IMR-90 (cell line): ENCODE measurements at regions of chr15 and their contacts with region 1.

Region 1: DNA sequence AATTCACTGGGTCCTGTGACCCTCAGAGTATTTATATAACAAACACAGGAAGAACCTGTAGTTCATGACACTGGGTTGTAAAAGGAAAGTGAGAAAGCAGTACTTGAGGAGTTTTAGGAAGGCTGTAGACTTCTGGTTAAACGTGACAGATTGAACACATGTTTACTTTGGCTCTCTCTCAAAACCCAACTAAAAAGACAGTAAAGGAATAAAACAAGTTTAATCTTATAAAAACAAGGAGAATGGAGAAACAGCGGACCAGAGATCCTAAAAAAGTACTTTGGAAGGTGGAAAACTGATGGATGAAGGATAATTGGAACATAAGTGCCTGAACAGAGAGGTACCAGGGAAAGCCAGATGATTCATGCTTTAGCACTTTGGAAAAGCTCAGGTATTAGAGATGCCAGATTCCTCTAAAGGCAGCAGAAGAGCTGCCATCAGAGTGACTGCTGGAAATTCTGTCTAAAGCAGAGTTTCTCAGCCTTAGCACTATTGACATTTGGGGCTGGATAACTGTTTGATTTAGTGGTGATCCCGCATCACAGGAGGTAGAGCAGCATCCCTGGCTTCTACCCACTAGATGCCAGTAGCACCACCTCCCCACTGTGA is 182.9 kb upstream of the RORA start:
- DNase-seq: no peak
- ATAC-seq: no peak
- H3K4me3 ChIP-seq: no peak overlapping the region
- H3K27ac ChIP-seq: no peak overlapping the region
- H3K4me1 ChIP-seq: no peaks in the 10 kb centered on the region
- H3K27me3 ChIP-seq: no peaks in the 10 kb centered on the region
- CTCF ChIP-seq: no peak
- POLR2A ChIP-seq: no peak
- RAD21 ChIP-seq: no peak

Region 2: DNA sequence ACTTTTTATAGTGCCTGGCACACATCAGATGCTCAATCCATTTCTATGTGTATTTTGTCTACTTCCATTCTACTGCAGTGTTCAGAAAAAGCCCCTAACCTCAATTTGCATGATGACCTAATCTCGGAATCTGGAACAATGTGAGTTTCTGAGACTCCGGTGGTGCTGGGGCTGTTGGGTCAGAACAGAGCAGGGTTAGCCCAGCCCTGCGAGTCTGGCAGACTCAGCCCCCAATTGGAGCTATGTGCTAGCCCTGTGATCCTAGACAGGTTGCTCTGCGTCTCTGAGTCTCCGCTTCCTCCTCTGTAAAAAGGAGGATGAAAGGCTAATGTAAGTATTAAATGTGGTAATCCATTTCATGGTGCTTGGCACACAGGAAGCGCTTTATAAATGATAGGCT is 838.1 kb before region 1 on chr15:
- CTCF ChIA-PET with region 1: no interaction called
- POLR2A ChIA-PET with region 1: no interaction called
- dilution Hi-C with region 1: no loop called
- in situ Hi-C with region 1: no loop called
- intact Hi-C with region 1: no loop called
- DNase-seq: no peak
- ATAC-seq: no peak
- H3K4me3 ChIP-seq: no peak overlapping the region
- H3K27ac ChIP-seq: no peak overlapping the region
- H3K4me1 ChIP-seq: peaks cover 16% of the 10 kb centered on the region
- H3K27me3 ChIP-seq: no peaks in the 10 kb centered on the region
- CTCF ChIP-seq: no peak
- POLR2A ChIP-seq: no peak
- RAD21 ChIP-seq: no peak

Region 3: GRCh38 chr15:60854858-60855564 is 557.0 kb before region 1 on chr15:
- CTCF ChIA-PET with region 1: no interaction called
- POLR2A ChIA-PET with region 1: no interaction called
- dilution Hi-C with region 1: no loop called
- in situ Hi-C with region 1: no loop called
- intact Hi-C with region 1: no loop called
- DNase-seq: peak; percentile 53
- ATAC-seq: no peak
- H3K4me3 ChIP-seq: no peak overlapping the region
- H3K27ac ChIP-seq: no peak overlapping the region
- H3K4me1 ChIP-seq: peaks cover 3% of the 10 kb centered on the region; the same call in 1 of the 2 replicates
- H3K27me3 ChIP-seq: peaks cover 5% of the 10 kb centered on the region; the same call in 1 of the 2 replicates
- CTCF ChIP-seq: no peak
- POLR2A ChIP-seq: no peak
- RAD21 ChIP-seq: no peak

Region 4: GRCh38 chr15:61499376-61499775 is 87.4 kb after region 1 on chr15:
- CTCF ChIA-PET with region 1: no interaction called
- POLR2A ChIA-PET with region 1: interaction called, 10 read pairs
- dilution Hi-C with region 1: no loop called
- in situ Hi-C with region 1: no loop called
- intact Hi-C with region 1: no loop called
- DNase-seq: no peak
- ATAC-seq: no peak
- H3K4me3 ChIP-seq: no peak overlapping the region
- H3K27ac ChIP-seq: no peak overlapping the region
- H3K4me1 ChIP-seq: no peaks in the 10 kb centered on the region
- H3K27me3 ChIP-seq: peaks cover 3% of the 10 kb centered on the region; the same call in 1 of the 2 replicates
- CTCF ChIP-seq: no peak
- POLR2A ChIP-seq: no peak
- RAD21 ChIP-seq: no peak